Uterus (tissue), 4 donors: ENCODE measurements at regions of chr11 and their contacts with region 1.

Region 1: DNA sequence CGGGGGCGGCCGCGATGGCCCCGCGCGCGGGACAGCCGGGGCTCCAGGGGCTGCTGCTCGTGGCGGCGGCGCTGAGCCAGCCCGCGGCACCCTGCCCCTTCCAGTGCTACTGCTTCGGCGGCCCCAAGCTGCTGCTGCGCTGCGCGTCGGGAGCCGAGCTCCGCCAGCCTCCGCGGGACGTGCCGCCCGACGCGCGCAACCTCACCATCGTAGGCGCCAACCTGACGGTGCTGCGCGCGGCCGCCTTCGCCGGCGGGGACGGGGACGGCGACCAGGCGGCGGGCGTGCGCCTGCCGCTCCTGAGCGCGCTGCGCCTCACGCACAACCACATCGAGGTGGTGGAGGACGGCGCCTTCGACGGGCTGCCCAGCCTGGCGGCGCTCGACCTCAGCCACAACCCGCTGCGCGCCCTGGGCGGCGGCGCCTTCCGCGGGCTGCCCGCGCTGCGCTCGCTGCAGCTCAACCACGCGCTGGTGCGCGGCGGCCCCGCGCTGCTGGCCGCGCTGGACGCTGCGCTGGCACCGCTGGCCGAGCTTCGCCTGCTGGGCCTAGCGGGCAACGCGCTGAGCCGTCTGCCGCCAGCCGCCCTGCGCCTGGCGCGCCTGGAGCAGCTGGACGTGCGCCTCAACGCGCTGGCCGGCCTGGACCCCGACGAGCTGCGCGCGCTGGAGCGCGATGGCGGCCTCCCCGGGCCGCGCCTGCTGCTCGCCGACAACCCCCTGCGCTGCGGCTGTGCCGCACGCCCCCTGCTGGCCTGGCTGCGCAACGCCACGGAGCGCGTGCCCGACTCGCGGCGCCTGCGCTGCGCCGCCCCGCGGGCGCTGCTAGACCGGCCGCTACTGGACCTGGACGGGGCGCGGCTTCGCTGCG is 697 bp downstream of the TPBGL start:
- DNase-seq: peak; percentile 55 to 87
- H3K4me3 ChIP-seq: peak overlapping the region in 1 of 2 donors; percentile 40
- H3K27ac ChIP-seq: no peak overlapping the region
- H3K4me1 ChIP-seq: peaks cover 0 to 12% of the 10 kb centered on the region in 2 donors
- H3K27me3 ChIP-seq: peaks cover 0 to 4% of the 10 kb centered on the region in 2 donors
- CTCF ChIP-seq: peak; percentile 42 to 99 (median 98)
- POLR2A ChIP-seq: peak in 1 of 2 donors; percentile 44

Region 2: DNA sequence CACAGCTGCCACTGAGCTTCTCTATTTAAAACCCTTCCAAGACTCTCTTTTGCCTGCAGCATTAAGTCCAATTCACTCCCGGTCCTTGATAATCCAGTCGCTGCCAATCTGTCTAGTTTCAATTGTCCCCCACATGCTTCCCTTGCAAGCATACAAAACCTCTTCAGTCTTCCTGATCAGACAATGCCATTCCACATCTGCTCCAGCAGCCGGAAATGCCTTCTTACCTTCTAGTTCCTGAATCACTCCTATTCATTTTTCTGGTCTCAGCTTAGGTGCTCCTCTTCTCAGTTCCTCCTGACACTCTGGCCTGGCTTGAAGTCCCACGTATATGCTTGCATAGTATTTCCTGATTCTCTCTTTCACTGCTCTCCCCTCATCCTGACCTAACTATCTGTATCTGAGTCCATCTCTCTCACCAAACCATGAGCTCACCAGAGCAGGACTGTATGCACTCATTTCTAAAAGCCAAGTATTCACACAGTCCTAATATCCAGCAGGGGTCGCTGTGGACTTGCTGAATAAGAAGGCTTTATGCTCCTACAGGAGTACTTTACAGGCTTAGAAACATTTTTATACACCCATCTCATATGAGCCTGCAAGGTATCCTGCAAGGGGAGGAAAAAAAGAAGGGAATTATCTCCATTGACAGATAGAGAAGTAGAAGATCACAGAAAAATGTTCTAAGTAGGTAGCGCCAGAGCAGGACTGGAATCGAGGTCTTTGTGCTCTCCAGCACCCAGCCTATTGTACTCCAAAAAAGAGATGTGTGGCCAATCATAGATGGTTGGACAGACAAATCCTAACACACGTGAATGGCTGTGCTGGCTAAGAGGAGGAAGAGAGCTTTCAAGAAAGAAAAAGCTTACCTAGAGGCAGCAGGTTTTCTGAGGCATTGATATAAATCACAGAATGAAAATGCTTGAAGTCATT is 311.6 kb before region 1 on chr11:
- intact Hi-C with region 1: loop called (anchors 10 kb)
- DNase-seq: peak; percentile 35 to 77
- H3K4me3 ChIP-seq: no peak overlapping the region
- H3K27ac ChIP-seq: no peak overlapping the region
- H3K4me1 ChIP-seq: peaks cover 0 to 6% of the 10 kb centered on the region in 2 donors
- H3K27me3 ChIP-seq: no peaks in the 10 kb centered on the region
- CTCF ChIP-seq: peak; percentile 71 to 85 (median 77)
- POLR2A ChIP-seq: no peak

Region 3: GRCh38 chr11:75142714-75143419 is 98.4 kb before region 1 on chr11:
- intact Hi-C with region 1: loop called (anchors 5 kb)
- DNase-seq: peak; percentile 54 to 63
- H3K4me3 ChIP-seq: no peak overlapping the region
- H3K27ac ChIP-seq: peak overlapping the region in 1 of 2 donors; percentile 30
- H3K4me1 ChIP-seq: no peaks in the 10 kb centered on the region
- H3K27me3 ChIP-seq: no peaks in the 10 kb centered on the region
- CTCF ChIP-seq: peak in 1 of 4 experiments; percentile 17
- POLR2A ChIP-seq: no peak

Region 4: GRCh38 chr11:75191330-75191717 is 49.9 kb before region 1 on chr11:
- intact Hi-C with region 1: no loop called
- DNase-seq: no peak
- H3K4me3 ChIP-seq: no peak overlapping the region
- H3K27ac ChIP-seq: no peak overlapping the region
- H3K4me1 ChIP-seq: peaks cover 0 to 6% of the 10 kb centered on the region in 2 donors
- H3K27me3 ChIP-seq: no peaks in the 10 kb centered on the region
- CTCF ChIP-seq: no peak
- POLR2A ChIP-seq: no peak